Adrenal gland (tissue), 19 donors: ENCODE measurements at regions of chr16 and their contacts with region 1.

Region 1: DNA sequence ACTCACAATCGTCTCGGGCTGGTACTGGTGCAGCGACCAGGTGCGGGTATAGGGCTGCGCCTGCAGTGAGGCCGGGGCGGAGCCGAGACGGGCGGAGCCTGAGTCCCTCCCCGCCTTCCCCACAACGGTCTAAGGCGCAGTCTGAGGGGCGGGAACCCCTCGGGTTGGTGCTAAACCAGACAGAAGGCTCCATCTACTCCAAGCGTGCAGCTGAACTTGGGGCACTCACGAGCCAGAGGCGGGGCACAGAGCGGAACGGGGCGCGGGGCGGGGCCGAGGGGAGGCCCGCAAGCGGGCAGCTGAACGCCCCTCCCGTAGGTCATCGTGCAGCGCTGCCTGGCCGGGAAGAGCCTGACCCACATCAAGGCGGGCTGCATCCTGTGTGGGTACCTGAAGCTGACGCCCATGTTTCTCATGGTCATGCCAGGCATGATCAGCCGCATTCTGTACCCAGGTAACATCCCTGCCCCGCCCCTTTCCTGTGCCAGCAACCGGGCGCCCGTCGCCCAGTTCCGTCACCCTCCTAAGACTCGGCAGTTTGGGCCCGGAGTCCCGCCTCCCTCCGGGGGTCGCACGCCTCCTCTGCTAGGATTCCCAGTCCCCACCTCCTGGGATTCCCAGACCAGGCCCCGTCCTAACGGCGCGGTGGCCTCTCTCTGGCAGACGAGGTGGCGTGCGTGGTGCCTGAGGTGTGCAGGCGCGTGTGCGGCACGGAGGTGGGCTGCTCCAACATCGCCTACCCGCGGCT is 5.0 kb downstream of the SLC5A2 start:
- DNase-seq: peak in 4 of 7 donors; percentile 38 to 57 (median 48)
- H3K4me3 ChIP-seq: peak overlapping the region in 2 of 4 donors; percentile 36 to 73
- H3K27ac ChIP-seq: no peak overlapping the region
- H3K4me1 ChIP-seq: peaks cover 8 to 16% of the 10 kb centered on the region in 2 donors
- H3K27me3 ChIP-seq: no peaks in the 10 kb centered on the region
- CTCF ChIP-seq: no peak
- POLR2A ChIP-seq: no peak

Region 2: GRCh38 chr16:31451681-31452351 is 36.1 kb before region 1 on chr16:
- intact Hi-C with region 1: no loop called
- DNase-seq: peak; percentile 54 to 90 (median 80)
- H3K4me3 ChIP-seq: no peak overlapping the region
- H3K27ac ChIP-seq: peak overlapping the region in 4 of 5 donors; percentile 50 to 87 (median 74)
- H3K4me1 ChIP-seq: peaks cover 37 to 51% of the 10 kb centered on the region in 2 donors
- H3K27me3 ChIP-seq: no peaks in the 10 kb centered on the region
- CTCF ChIP-seq: peak; percentile 38 to 65 (median 61)
- POLR2A ChIP-seq: peak in 1 of 2 donors; percentile 21

Region 3: GRCh38 chr16:31527734-31528274 is 39.9 kb after region 1 on chr16 and contains the start of gene AHSP:
- intact Hi-C with region 1: no loop called
- DNase-seq: no peak
- H3K4me3 ChIP-seq: no peak within 1 kb of the TSS
- H3K27ac ChIP-seq: no peak within 1 kb of the TSS
- H3K4me1 ChIP-seq: no peaks in the 10 kb centered on the region
- H3K27me3 ChIP-seq: peaks cover 9% of the 10 kb centered on the region
- CTCF ChIP-seq: no peak
- POLR2A ChIP-seq: no peak
- total RNA-seq, gene AHSP: 35.0 TPM in 1 of 9 donors, not detected in the others

Region 4: DNA sequence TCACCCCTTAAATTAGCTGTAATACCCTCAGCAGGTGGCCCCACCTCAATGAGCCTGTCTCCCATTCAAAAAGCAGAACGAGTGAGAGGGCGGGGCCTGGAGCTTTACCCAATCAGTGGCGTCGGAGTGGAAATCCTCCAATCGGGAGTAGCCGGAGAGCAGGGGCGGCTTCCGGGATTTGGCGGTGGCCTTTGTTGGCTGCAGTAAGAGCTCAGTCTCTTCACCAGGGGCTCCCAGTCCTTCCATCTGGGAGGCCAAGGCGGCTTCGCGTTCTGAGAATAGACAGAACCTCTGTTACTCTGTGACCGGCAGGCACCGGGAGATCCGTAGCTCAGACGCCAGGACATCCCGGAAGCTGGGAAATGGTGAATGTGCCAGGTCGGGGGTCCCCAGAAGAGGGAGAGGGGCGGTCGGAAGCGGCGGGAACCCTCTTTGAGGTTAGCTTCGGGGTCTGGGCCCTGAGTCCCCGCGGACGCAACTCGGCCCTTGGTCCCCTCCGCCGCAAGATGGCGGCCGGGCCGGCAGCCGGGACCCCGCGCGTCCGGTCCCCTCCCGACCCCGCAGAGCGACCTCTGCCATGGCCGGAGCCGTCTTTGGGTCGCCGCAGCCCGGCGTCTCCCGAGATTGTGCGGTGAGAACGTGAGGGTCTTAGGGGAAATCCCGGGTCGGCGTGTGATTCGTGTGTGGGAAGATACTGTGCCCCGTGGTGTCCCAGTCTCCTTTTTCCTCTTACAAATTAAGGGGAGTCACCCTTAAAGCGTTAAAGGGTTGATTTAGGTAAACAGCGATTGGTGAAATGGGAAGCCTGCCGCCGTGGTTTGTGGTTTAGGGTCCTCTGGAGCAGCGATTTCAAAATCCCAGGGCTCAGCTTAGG is 225.4 kb after region 1 on chr16:
- intact Hi-C with region 1: loop called in 1 of 2 experiments (anchors 10 kb)
- DNase-seq: peak; percentile 89 to 98 (median 96)
- H3K4me3 ChIP-seq: peak overlapping the region; percentile 19 to 98 (median 73)
- H3K27ac ChIP-seq: peak overlapping the region; percentile 66 to 95 (median 90)
- H3K4me1 ChIP-seq: peaks cover 8 to 18% of the 10 kb centered on the region in 2 donors
- H3K27me3 ChIP-seq: no peaks in the 10 kb centered on the region
- CTCF ChIP-seq: no peak
- POLR2A ChIP-seq: peak; percentile 88 to 90

Region 5: DNA sequence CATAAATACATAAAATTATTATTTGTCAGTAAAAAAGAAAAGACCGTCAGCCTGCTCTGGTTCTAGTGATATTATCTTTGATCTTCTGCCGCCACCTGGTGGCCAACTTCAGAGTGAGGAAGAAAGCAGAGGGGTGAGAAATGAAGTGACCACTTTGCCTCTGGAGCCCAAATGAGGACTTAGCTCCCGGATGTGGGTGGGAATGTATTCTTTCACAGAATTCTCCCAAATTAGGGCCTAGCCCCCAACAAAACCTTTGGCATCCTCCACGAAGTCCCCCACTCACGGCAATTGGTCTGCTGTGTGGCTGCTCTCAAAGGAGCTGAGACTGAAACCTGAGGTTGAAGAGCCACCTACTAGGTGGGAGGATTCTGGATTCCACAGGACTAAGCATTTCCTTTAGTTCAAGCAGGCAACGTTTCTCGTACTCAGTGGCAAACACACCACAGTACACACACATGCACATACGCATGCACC is 380.8 kb after region 1 on chr16:
- intact Hi-C with region 1: loop called in 1 of 2 experiments (anchors 10 kb)
- DNase-seq: peak; percentile 75 to 93 (median 83)
- H3K4me3 ChIP-seq: no peak overlapping the region
- H3K27ac ChIP-seq: peak overlapping the region in 3 of 5 donors; percentile 32 to 81 (median 60)
- H3K4me1 ChIP-seq: peaks cover 0 to 3% of the 10 kb centered on the region in 2 donors
- H3K27me3 ChIP-seq: no peaks in the 10 kb centered on the region
- CTCF ChIP-seq: peak; percentile 78 to 89 (median 80)
- POLR2A ChIP-seq: no peak